ENCODE measurements at regions of chr1 and their contacts with region 1.

Region 1: DNA sequence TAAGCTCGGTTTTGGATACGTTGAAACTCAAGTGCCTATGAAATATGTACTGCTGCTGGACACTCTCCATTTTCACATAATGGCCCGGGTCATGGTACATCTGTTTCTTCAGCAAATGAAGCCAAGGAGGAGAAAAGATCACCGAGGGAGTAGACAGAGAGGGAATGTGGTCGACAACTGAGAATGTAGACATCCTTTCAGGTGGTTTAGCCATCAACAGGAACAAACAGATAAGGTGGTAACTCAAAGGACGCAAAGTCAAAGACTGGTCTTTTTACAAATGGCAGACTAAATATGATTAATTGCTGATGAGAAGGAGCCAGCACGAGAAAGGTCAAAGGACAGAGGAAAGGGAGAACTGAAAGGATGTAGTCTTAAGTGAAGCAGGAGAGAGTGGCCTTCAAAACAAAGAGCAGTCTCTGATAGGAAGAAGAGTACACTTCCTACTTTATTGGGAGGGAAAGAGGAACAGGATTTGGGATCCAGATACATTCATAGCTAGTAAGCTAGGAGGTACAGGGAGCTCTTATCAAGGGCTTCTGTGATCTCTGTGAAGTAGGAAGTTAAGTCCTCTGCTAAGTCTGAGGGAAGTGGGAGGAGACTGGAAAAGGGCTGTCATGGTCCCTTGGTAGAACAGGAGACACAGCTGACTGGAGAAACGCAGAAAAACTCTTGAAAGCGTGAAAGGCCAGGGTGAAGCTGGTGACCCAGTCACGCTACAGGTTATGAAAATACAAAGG is 28.3 kb downstream of the NUP133 start:
- DNase-seq: no peak
- H3K4me3 ChIP-seq: no peak overlapping the region
- H3K27ac ChIP-seq: no peak overlapping the region
- H3K4me1 ChIP-seq: peaks cover 0 to 3% (median 0%) of the 10 kb centered on the region in 4 donors
- H3K27me3 ChIP-seq: no peaks in the 10 kb centered on the region
- CTCF ChIP-seq: no peak
- EP300 ChIP-seq: no peak
- POLR2A ChIP-seq: no peak

Region 2: DNA sequence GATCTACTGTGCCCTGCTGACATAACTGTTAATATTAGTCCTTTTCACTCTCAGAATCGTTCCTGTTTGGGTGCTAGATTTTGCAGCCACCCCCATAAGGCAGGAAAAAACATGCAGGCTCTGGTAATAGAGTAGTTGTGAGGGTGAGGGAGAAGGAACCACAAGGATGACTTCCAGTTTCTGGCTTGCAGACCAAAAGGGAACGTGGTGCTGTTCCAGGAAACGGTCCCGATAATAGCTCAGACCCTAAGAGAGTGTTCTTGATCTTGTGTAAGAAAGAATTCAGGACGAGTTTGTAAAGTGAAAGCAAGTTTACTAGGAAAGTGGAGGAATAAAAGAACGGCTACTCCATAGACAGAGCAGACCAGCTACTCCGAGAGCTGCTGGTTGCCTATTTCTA is 795.2 kb before region 1 on chr1:
- in situ Hi-C with region 1: no loop called
- intact Hi-C with region 1: loop called (anchors 10 kb)
- DNase-seq: no peak
- H3K4me3 ChIP-seq: no peak overlapping the region
- H3K27ac ChIP-seq: no peak overlapping the region
- H3K4me1 ChIP-seq: no peaks in the 10 kb centered on the region
- H3K27me3 ChIP-seq: peaks cover 14% of the 10 kb centered on the region
- CTCF ChIP-seq: no peak
- EP300 ChIP-seq: no peak
- POLR2A ChIP-seq: no peak

Region 3: GRCh38 chr1:229258031-229258756 is 221.6 kb before region 1 on chr1:
- in situ Hi-C with region 1: loop called (anchors 5 to 25 kb)
- intact Hi-C with region 1: loop called (anchors 5 kb)
- DNase-seq: peak; percentile 68
- H3K4me3 ChIP-seq: no peak overlapping the region
- H3K27ac ChIP-seq: no peak overlapping the region
- H3K4me1 ChIP-seq: peaks cover 0 to 4% (median 1%) of the 10 kb centered on the region in 4 donors
- H3K27me3 ChIP-seq: no peaks in the 10 kb centered on the region
- CTCF ChIP-seq: peak; percentile 73 to 91 (median 85)
- EP300 ChIP-seq: no peak
- POLR2A ChIP-seq: no peak

Region 4: DNA sequence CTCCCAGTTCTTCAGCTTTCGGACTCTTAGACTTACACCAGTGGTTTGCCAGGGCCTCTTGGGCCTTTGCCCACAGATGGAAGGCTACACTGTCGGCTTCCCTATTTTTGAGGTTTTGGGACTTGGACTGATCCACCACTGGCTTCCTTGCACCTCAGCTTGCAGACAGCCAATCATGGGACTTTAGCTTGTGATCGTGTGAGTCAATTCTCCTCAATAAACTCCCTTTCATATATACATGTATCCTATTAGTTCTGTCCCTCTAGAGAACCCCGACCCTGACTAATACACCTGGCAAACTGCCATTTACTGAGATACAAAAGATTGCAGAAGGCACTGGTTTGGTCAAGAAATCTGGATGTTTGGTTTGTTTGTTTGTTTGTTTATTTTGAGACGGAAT is 215.3 kb before region 1 on chr1:
- in situ Hi-C with region 1: loop called (anchors 5 to 25 kb)
- intact Hi-C with region 1: loop called (anchors 5 kb)
- DNase-seq: no peak
- H3K4me3 ChIP-seq: no peak overlapping the region
- H3K27ac ChIP-seq: no peak overlapping the region
- H3K4me1 ChIP-seq: no peaks in the 10 kb centered on the region
- H3K27me3 ChIP-seq: no peaks in the 10 kb centered on the region
- CTCF ChIP-seq: no peak
- EP300 ChIP-seq: no peak
- POLR2A ChIP-seq: no peak

Region 5: DNA sequence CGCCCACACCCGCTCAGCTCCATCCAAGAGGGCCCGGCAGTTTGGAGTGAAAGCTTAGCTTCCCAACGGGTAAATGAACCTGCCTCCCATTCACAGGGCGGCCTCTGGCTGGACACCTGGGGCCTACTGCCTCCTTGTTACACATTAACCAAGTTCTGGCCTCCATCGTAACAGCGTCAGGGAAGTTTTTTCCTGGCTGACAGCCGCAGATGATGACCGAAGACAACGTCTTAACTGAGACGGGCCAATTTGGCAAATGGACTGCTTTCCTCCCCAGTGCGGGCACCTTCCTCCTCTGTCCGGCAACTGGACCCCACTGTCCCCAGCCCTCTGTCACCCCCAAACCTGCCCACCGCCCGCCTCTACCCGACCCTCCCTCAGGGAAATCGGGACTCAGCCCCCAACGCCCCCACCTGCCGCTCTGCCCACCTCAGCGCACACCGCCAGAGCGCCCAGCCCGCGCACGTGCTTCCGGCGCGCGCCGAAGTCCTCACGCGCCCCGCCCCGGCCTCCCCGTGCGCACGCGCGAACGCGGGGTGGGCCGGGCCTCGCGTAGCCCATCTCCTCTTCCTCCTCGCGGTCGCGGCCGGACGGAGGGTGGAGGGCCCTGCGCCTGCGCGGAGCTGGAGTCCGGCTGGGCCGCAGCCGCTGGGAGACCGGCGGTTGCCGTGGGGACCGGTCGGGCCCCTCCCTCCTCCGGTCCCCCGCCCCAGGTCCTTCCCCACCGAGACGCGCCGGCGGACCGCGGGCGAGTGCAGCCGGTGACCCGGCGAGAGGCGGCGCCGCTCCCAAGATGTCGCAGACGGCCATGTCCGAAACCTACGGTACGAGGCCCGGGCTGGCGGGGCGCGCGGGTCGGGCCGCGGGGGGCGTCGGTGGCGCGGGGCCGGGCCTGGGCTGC is 209.0 kb before region 1 on chr1 and contains the start of gene RAB4A:
- in situ Hi-C with region 1: loop called in 1 of 4 experiments (anchors 25 kb)
- intact Hi-C with region 1: no loop called
- DNase-seq: peak; percentile 92
- H3K4me3 ChIP-seq: peak within 1 kb of the TSS; percentile 67 to 90 (median 80)
- H3K27ac ChIP-seq: peak within 1 kb of the TSS; percentile 86 to 90 (median 87)
- H3K4me1 ChIP-seq: peaks cover 16 to 49% (median 31%) of the 10 kb centered on the region in 4 donors
- H3K27me3 ChIP-seq: no peaks in the 10 kb centered on the region
- CTCF ChIP-seq: no peak
- EP300 ChIP-seq: no peak
- POLR2A ChIP-seq: peak; percentile 79
- total RNA-seq, gene RAB4A: 7.4 to 56.9 (median 28.0) TPM

Region 6: GRCh38 chr1:229296541-229296941 is 183.3 kb before region 1 on chr1:
- in situ Hi-C with region 1: no loop called
- intact Hi-C with region 1: no loop called
- DNase-seq: no peak
- H3K4me3 ChIP-seq: no peak overlapping the region
- H3K27ac ChIP-seq: no peak overlapping the region
- H3K4me1 ChIP-seq: no peaks in the 10 kb centered on the region
- H3K27me3 ChIP-seq: no peaks in the 10 kb centered on the region
- CTCF ChIP-seq: no peak
- EP300 ChIP-seq: no peak
- POLR2A ChIP-seq: no peak